ENCODE measurements at regions of chr3 and their contacts with region 1.

Region 1: DNA sequence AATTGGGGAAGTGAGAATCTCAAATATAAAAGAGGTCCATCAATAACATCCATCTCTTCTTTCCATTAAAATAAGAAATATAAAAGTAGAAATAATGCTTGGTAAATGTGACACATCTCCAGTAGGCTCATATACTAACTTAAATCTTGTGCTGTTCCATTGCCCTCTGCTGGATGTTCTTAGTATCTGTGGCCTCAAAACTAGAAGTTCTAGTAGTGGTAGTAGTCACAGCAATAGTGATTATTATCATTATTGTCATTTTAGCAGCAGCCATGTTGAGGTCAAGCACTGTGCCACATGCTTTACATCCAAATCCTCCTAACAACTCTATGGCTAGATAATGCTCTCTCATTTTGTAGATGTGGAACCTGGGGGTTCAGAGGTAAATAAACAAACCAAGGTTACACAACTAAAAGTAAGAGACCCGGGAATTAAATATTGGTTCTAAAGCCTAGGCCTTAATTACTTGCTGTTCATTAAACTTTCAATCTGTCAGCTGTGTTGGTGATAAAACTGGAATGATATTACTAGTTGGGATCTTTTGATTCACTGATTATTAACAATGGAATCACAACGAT is 20.2 kb upstream of the BTLA start:
- DNase-seq: no peak
- ATAC-seq: peak; percentile 60 to 72
- H3K4me3 ChIP-seq: no peak overlapping the region
- H3K27ac ChIP-seq: no peak overlapping the region
- H3K4me1 ChIP-seq: no peaks in the 10 kb centered on the region
- H3K27me3 ChIP-seq: no peaks in the 10 kb centered on the region

Region 2: DNA sequence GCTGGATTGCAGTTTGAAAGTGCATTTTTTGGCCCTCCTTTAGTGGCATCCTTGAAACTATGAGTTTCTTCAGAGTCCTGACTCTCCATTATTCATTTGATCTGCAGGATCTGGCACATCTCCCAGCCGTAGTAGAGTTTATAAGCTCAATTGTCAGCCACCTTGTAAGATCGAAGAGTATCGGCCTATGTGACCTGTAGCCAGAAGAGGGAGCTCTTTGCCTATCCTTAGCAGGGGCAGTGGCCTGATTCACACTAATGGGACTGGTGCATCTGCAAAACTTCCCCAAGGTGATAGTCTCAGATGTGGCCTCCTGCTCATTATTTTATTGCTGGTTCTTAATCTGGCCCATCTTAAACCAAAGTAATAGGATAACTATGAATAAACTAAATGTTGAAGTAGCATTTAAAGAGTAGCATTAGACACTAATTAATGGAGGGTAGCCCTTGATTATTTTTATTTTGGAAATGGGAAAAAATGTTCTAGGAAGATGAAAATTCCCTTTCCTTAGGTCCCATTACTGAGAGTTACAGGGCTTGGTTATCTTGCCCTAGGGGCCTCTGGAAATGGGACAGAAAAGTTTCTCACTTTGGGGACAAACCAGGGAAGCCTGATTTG is 407.6 kb before region 1 on chr3:
- intact Hi-C with region 1: loop called in 2 of 4 experiments (anchors 5 kb)
- DNase-seq: no peak
- ATAC-seq: peak; percentile 70 to 74
- H3K4me3 ChIP-seq: no peak overlapping the region
- H3K27ac ChIP-seq: no peak overlapping the region
- H3K4me1 ChIP-seq: peaks cover 3% of the 10 kb centered on the region
- H3K27me3 ChIP-seq: no peaks in the 10 kb centered on the region

Region 3: GRCh38 chr3:112293368-112294321 is 225.9 kb before region 1 on chr3 and contains the start of gene SLC9C1:
- intact Hi-C with region 1: loop called in 2 of 4 experiments (anchors 10 kb)
- DNase-seq: peak in 2 of 3 donors; percentile 28 to 47
- ATAC-seq: peak; percentile 92 to 93
- H3K4me3 ChIP-seq: peak within 1 kb of the TSS; percentile 71
- H3K27ac ChIP-seq: peak within 1 kb of the TSS; percentile 93
- H3K4me1 ChIP-seq: no peaks in the 10 kb centered on the region
- H3K27me3 ChIP-seq: no peaks in the 10 kb centered on the region
- total RNA-seq, gene SLC9C1: 0.15 to 0.69 (median 0.41) TPM

Region 4: DNA sequence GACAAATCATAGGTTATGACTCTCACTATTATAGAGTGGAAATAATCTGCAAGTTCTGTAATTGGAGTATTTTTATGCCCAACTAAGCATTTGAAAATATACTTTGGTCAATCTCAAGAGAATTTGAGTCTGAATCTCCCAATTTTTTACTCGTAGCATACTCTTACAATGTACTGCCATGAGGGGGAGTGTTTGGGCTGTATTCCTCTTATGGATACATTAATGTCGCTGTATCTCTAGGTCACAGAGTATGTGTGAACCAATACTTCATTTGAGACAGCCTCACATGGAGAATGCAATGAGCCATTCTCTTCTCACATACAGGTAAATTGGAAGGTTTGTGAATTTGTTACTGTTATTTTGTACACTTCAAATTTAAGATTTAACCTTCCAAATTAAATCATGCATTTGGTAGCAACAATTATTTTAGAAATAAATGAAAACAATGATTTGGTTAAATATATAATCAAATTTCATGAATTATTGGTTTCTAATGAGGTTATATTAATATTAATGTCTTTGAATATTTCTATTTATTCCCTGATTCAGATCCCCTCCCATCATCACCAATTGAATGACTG is 192.1 kb before region 1 on chr3:
- intact Hi-C with region 1: loop called (anchors 2 to 10 kb)
- DNase-seq: no peak
- ATAC-seq: peak; percentile 89 to 92
- H3K4me3 ChIP-seq: no peak overlapping the region
- H3K27ac ChIP-seq: no peak overlapping the region
- H3K4me1 ChIP-seq: no peaks in the 10 kb centered on the region
- H3K27me3 ChIP-seq: no peaks in the 10 kb centered on the region

Region 5: DNA sequence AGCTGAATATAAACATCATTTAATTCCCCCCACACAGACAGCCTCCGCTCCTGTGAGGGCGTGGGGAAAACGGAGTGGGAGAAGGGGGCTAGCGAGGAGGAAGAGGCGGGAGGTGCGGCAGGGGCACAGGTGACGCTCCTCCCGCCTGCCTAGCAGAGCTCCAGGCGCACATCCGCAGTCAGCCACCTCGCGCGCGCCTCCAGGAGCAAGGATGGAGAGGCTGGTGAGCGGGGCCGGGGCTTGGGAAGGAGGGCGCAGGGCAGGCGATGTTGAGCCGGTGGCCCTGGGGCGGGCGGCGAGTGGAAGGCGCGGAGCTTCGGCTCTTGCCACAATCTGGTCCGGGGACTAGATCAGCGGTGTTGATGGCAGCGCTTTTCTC is 186.5 kb before region 1 on chr3 and contains the start of gene CD200:
- intact Hi-C with region 1: loop called in 3 of 4 experiments (anchors 5 to 10 kb)
- DNase-seq: peak; percentile 55 to 87 (median 83)
- ATAC-seq: peak; percentile 87 to 93
- H3K4me3 ChIP-seq: peak within 1 kb of the TSS; percentile 37
- H3K27ac ChIP-seq: peak within 1 kb of the TSS; percentile 71
- H3K4me1 ChIP-seq: no peaks in the 10 kb centered on the region
- H3K27me3 ChIP-seq: no peaks in the 10 kb centered on the region
- total RNA-seq, gene CD200: 2.8 to 4.5 (median 3.6) TPM

Measured in right cardiac atrium (tissue), 5 donors.